Mammary epithelial cell (primary cell): ENCODE measurements at regions of chr15 and their contacts with region 1.

Region 1: DNA sequence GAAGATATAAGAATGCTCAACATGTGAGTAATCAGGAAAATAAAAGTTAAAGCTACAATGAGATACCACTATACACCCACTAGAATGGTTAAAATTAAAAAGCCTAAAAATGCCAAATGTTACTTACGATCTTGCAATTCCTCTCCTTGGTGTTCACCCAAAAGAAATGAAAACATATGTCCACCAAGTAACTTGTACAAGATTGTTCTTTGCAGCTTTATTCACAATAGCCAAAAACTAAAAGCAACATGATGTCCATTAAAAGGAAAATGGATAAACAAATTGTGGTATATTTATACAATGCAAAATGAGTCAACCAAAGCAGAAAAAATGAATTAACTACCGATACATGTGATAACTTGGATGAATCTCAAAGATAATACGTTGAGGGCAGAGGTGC is 301.6 kb upstream of the THBS1 start:
- DNase-seq: no peak
- H3K4me3 ChIP-seq: no peak overlapping the region
- H3K27ac ChIP-seq: no peak overlapping the region
- H3K4me1 ChIP-seq: peaks cover 13% of the 10 kb centered on the region
- H3K27me3 ChIP-seq: no peaks in the 10 kb centered on the region
- CTCF ChIP-seq: no peak

Region 2: GRCh38 chr15:39242345-39242744 is 37.0 kb before region 1 on chr15:
- CTCF ChIA-PET with region 1: no interaction called
- dilution Hi-C with region 1: loop called (anchors 5 kb)
- in situ Hi-C with region 1: no loop called
- intact Hi-C with region 1: no loop called
- DNase-seq: peak; percentile 90
- H3K4me3 ChIP-seq: no peak overlapping the region
- H3K27ac ChIP-seq: no peak overlapping the region
- H3K4me1 ChIP-seq: peaks cover 33% of the 10 kb centered on the region
- H3K27me3 ChIP-seq: no peaks in the 10 kb centered on the region
- CTCF ChIP-seq: no peak